ENCODE measurements at regions of chr14 and their contacts with region 1.

Region 1: GRCh38 chr14:75372260-75372659 is 55.6 kb upstream of the JDP2 start:
- DNase-seq: no peak
- H3K4me3 ChIP-seq: no peak overlapping the region
- H3K27ac ChIP-seq: no peak overlapping the region
- H3K4me1 ChIP-seq: no peaks in the 10 kb centered on the region
- H3K27me3 ChIP-seq: no peaks in the 10 kb centered on the region
- CTCF ChIP-seq: no peak
- EP300 ChIP-seq: no peak
- POLR2A ChIP-seq: no peak

Region 2: DNA sequence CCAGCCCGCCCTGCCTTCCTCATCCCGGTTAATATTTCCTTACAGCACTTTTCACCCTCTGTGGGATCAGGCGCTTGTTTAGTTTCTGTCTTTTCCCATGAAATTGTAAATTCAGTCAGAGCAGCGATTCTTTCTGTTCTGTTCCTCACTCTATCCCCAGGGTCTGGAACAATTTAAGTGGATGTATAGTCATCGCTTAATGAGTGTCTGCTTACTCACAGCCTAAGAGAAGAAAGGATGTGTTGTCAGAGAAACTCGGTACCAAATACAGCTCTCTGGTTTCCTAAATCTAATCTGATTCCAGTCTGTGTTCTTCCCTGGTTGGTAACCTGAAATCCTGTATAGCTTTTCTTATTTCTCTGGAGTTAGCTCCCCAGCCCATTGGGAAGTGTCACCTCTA is 48.7 kb before region 1 on chr14:
- intact Hi-C with region 1: loop called in 1 of 4 experiments (anchors 10 kb)
- DNase-seq: no peak
- H3K4me3 ChIP-seq: no peak overlapping the region
- H3K27ac ChIP-seq: no peak overlapping the region
- H3K4me1 ChIP-seq: no peaks in the 10 kb centered on the region
- H3K27me3 ChIP-seq: no peaks in the 10 kb centered on the region
- CTCF ChIP-seq: no peak
- EP300 ChIP-seq: no peak
- POLR2A ChIP-seq: no peak

Region 3: DNA sequence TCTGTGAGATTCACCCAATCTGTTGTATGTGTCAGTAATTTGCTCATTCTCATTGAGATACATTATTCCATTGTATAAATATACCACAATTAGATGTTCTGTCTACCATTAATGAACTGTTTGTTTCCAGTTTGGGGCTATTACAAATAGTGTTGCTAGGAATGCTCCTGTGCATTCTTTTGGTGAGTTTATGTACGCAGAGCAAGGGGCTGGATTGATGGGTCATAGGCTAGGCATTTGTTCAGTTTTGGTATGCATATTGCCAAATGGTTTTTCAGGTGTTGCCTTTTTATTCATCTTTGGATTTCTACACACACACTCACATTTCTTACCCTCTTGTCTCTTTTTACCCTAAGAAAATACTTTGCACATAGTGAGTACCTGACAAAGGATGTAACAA is 872.8 kb after region 1 on chr14:
- intact Hi-C with region 1: no loop called
- DNase-seq: no peak
- H3K4me3 ChIP-seq: no peak overlapping the region
- H3K27ac ChIP-seq: no peak overlapping the region
- H3K4me1 ChIP-seq: no peaks in the 10 kb centered on the region
- H3K27me3 ChIP-seq: no peaks in the 10 kb centered on the region
- CTCF ChIP-seq: no peak
- EP300 ChIP-seq: no peak
- POLR2A ChIP-seq: no peak

Measured in ovary (tissue), 10 donors.